HCT116 (cell line): ENCODE measurements at regions of chr14 and their contacts with region 1.

Region 1: DNA sequence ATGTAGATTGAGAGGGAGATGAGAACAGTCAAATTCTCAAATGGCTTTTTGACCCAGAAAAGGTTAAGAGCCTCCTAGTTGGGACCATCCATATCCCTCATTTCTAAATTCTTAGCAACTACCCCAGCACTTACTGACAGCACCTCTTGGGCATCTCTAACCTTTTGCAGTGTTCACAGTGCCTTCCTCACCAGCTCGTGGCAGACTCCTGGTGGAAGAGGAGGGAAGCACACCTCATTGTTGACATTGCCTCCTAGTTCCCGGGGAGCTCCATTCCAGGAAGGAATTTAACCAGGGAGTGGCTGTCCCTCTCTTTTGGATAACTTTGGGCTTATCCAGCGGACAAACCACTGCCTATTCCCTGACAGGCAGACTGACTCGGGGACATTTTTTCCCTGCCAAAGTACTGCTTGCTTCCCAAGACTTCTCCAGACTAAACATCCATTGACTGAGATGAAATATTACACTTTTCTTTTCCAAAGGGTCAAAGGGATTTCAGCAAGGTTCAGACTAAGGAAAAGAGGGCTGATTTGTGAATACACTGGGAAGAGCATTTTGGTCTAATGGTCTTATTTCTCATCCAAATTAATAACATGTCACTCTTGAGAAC is 9.0 kb upstream of the OR6J1 start:
- DNase-seq: peak; percentile 73
- ATAC-seq: peak; percentile 99
- H3K4me3 ChIP-seq: no peak overlapping the region
- H3K27ac ChIP-seq: no peak overlapping the region
- H3K4me1 ChIP-seq: peaks cover 2 to 6% of the 10 kb centered on the region in 2 experiments; a peak in 3 of 4 replicates
- H3K27me3 ChIP-seq: no peaks in the 10 kb centered on the region
- CTCF ChIP-seq: peak; percentile 87 to 94 (median 92)
- POLR2A ChIP-seq: no peak
- RAD21 ChIP-seq: peak; percentile 85

Region 2: DNA sequence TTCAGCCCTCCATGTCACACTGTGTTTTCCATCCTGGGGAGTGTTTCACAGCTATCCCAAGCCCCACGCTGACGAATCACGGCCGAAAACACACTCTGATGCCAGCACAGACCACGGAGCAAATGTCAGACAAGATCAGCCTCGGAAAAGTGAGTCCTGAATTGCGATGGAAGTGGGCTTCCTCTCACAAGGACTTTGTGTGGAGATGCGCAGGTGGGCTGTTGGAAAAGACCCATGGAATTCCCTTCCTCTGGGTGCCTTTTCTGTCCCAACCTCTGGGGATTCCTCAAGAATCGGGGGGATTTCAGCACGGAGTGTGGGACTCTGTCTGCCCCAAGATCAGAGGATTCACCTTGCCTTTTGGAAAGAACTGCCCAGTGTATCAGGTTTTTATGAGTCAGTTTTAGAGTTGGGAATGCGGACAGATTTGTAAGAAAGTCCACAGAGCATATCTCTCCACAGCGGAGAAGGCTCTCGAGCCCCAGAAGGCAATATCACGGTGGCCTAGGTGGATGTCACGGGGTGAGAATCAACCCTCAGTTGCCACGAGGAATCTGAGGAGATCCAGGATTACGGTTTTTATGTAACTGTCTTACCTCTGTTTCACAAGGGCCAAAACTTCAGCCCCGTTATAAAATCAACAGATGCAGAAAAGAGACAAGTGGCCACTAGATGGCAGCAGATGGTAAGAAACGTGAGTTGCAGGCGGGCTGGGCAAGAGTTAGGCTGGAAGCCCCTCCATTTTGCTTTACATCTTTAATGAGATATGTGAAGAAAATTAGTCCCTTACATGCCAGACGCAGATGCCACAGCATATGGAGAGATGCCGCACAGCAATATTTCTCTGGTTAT is 266.0 kb before region 1 on chr14:
- CTCF ChIA-PET with region 1: no interaction called
- POLR2A ChIA-PET with region 1: no interaction called
- RAD21 ChIA-PET with region 1: no interaction called
- intact Hi-C with region 1: loop called (anchors 5 kb)
- DNase-seq: peak; percentile 53
- ATAC-seq: peak; percentile 75
- H3K4me3 ChIP-seq: no peak overlapping the region
- H3K27ac ChIP-seq: no peak overlapping the region
- H3K4me1 ChIP-seq: no peaks in the 10 kb centered on the region
- H3K27me3 ChIP-seq: peaks cover 83% of the 10 kb centered on the region
- CTCF ChIP-seq: peak; percentile 64 to 89 (median 66)
- POLR2A ChIP-seq: no peak
- RAD21 ChIP-seq: peak; percentile 77

Region 3: GRCh38 chr14:22570132-22570949 is 82.8 kb before region 1 on chr14:
- CTCF ChIA-PET with region 1: interaction called, 93 read pairs
- POLR2A ChIA-PET with region 1: interaction called, 18 read pairs
- RAD21 ChIA-PET with region 1: interaction called, 3 to 14 read pairs
- intact Hi-C with region 1: loop called (anchors 2 kb)
- DNase-seq: peak; percentile 79
- ATAC-seq: peak; percentile 87
- H3K4me3 ChIP-seq: no peak overlapping the region
- H3K27ac ChIP-seq: peak overlapping the region; percentile 48; the same call in 1 of the 2 replicates
- H3K4me1 ChIP-seq: peaks cover 6 to 24% of the 10 kb centered on the region in 2 experiments; a peak in 2 of 4 replicates
- H3K27me3 ChIP-seq: no peaks in the 10 kb centered on the region
- CTCF ChIP-seq: peak; percentile 77 to 94 (median 92)
- POLR2A ChIP-seq: no peak
- RAD21 ChIP-seq: peak; percentile 84

Region 4: GRCh38 chr14:22634233-22634900 is 18.8 kb before region 1 on chr14:
- CTCF ChIA-PET with region 1: no interaction called
- POLR2A ChIA-PET with region 1: no interaction called
- RAD21 ChIA-PET with region 1: no interaction called
- intact Hi-C with region 1: no loop called
- DNase-seq: no peak
- ATAC-seq: no peak
- H3K4me3 ChIP-seq: no peak overlapping the region
- H3K27ac ChIP-seq: no peak overlapping the region
- H3K4me1 ChIP-seq: no peaks in the 10 kb centered on the region
- H3K27me3 ChIP-seq: no peaks in the 10 kb centered on the region
- CTCF ChIP-seq: no peak
- POLR2A ChIP-seq: no peak
- RAD21 ChIP-seq: no peak

Region 5: DNA sequence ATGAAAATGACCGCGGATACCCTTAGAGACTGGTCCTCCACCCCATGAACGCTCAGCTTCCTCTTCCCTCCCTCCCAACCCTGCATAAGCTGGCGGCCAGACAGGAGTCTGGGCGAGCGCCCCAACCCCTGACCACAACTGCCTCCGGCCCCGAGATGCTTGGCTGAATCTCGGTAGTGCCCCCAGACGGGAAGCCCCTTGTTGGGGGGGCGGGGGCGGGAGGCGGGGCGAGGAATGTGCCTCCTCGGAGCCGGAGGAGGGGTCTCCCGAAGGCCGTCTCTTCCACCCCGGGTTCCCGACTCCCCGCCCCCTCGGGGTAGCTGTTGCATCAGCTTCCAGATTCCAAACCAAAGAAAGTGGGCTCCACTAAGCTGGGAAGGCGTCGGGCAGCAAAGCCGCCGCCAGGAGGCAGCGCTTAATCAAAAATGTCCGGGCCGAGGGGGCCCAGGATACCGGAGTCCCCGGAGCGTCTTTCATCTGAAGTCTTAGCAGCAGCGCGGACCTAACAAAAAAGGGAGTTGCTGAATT is 169.5 kb after region 1 on chr14:
- CTCF ChIA-PET with region 1: interaction called, 8 read pairs
- POLR2A ChIA-PET with region 1: no interaction called
- RAD21 ChIA-PET with region 1: interaction called in 1 of 2 experiments, 3 read pairs
- intact Hi-C with region 1: loop called (anchors 5 kb)
- DNase-seq: peak; percentile 51
- ATAC-seq: peak; percentile 86
- H3K4me3 ChIP-seq: peak overlapping the region; percentile 29 to 43
- H3K27ac ChIP-seq: no peak overlapping the region
- H3K4me1 ChIP-seq: peaks cover 7 to 35% of the 10 kb centered on the region in 2 experiments
- H3K27me3 ChIP-seq: no peaks in the 10 kb centered on the region
- CTCF ChIP-seq: peak; percentile 81 to 89 (median 87)
- POLR2A ChIP-seq: no peak
- RAD21 ChIP-seq: peak; percentile 88

Region 6: GRCh38 chr14:22900081-22900799 is 247.1 kb after region 1 on chr14:
- CTCF ChIA-PET with region 1: interaction called, 7 read pairs
- POLR2A ChIA-PET with region 1: no interaction called
- RAD21 ChIA-PET with region 1: no interaction called
- intact Hi-C with region 1: loop called (anchors 5 kb)
- DNase-seq: peak; percentile 70
- ATAC-seq: peak; percentile 87
- H3K4me3 ChIP-seq: no peak overlapping the region
- H3K27ac ChIP-seq: 0 out of 2 replicates have a peak overlapping the region, but pooled peaks have one; percentile 17
- H3K4me1 ChIP-seq: peaks cover 0 to 22% of the 10 kb centered on the region in 2 experiments; a peak in 2 of 4 replicates
- H3K27me3 ChIP-seq: no peaks in the 10 kb centered on the region
- CTCF ChIP-seq: peak; percentile 62 to 76 (median 67); a peak in 5 of 6 replicates
- POLR2A ChIP-seq: no peak
- RAD21 ChIP-seq: peak; percentile 68